ENCODE measurements at regions of chr19 and their contacts with region 1.

Region 1: DNA sequence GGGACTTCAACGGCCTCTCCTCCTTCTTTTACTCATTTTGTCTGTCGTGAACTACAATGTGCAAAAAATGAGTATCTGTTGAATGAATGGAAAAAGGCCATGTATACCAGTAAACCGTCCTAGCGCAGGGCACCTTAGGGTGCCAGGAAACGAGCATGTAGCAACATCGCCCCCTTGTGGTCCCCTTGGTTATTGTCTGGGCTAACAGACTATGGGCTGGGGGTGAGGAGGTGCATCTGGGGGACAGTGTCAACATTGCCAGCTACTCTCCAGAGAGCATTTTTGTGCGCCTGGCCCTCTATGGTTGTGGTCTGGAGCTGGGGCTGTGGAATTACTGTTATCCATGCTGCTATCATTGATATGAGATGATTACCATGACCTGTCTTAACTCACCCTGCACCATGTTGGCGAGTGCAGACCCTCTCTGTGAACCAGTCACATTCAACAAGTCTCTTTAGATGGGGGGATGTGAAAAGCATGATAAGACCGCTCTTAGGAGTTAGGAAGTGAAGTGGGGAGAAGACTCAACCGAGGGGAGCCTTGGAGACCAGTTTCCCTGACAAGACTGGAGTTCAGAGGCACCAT is 22.8 kb upstream of the SIGLEC11 start:
- DNase-seq: peak; percentile 19
- ATAC-seq: peak; percentile 96
- H3K4me3 ChIP-seq: no peak overlapping the region
- H3K27ac ChIP-seq: no peak overlapping the region
- H3K4me1 ChIP-seq: no peaks in the 10 kb centered on the region
- H3K27me3 ChIP-seq: no peaks in the 10 kb centered on the region
- CTCF ChIP-seq: peak; percentile 90 to 93 (median 92)
- EP300 ChIP-seq: no peak
- POLR2A ChIP-seq: no peak
- RAD21 ChIP-seq: peak; percentile 95

Region 2: GRCh38 chr19:49937750-49938381 is 45.9 kb before region 1 on chr19:
- CTCF ChIA-PET with region 1: interaction called, 11 read pairs
- POLR2A ChIA-PET with region 1: interaction called, 3 read pairs
- RAD21 ChIA-PET with region 1: interaction called, 4 read pairs
- SMC1A ChIA-PET with region 1: interaction called, 6 read pairs
- in situ Hi-C with region 1: loop called (anchors 5 kb)
- intact Hi-C with region 1: loop called (anchors 1 kb)
- DNase-seq: no peak
- ATAC-seq: peak; percentile 79
- H3K4me3 ChIP-seq: peak overlapping the region; percentile 33; the same call in 1 of the 2 replicates
- H3K27ac ChIP-seq: no peak overlapping the region
- H3K4me1 ChIP-seq: no peaks in the 10 kb centered on the region
- H3K27me3 ChIP-seq: no peaks in the 10 kb centered on the region
- CTCF ChIP-seq: peak; percentile 92 to 98 (median 93)
- EP300 ChIP-seq: no peak
- POLR2A ChIP-seq: no peak
- RAD21 ChIP-seq: peak; percentile 94

Region 3: GRCh38 chr19:50039968-50040367 is 56.2 kb after region 1 on chr19:
- CTCF ChIA-PET with region 1: no interaction called
- POLR2A ChIA-PET with region 1: no interaction called
- RAD21 ChIA-PET with region 1: no interaction called
- SMC1A ChIA-PET with region 1: no interaction called
- in situ Hi-C with region 1: no loop called
- intact Hi-C with region 1: no loop called
- DNase-seq: no peak
- ATAC-seq: no peak
- H3K4me3 ChIP-seq: no peak overlapping the region
- H3K27ac ChIP-seq: no peak overlapping the region
- H3K4me1 ChIP-seq: no peaks in the 10 kb centered on the region
- H3K27me3 ChIP-seq: no peaks in the 10 kb centered on the region
- CTCF ChIP-seq: no peak
- EP300 ChIP-seq: no peak
- POLR2A ChIP-seq: no peak
- RAD21 ChIP-seq: no peak

Measured in GM12878 (cell line).